ENCODE measurements at regions of chr10 and their contacts with region 1.

Region 1: DNA sequence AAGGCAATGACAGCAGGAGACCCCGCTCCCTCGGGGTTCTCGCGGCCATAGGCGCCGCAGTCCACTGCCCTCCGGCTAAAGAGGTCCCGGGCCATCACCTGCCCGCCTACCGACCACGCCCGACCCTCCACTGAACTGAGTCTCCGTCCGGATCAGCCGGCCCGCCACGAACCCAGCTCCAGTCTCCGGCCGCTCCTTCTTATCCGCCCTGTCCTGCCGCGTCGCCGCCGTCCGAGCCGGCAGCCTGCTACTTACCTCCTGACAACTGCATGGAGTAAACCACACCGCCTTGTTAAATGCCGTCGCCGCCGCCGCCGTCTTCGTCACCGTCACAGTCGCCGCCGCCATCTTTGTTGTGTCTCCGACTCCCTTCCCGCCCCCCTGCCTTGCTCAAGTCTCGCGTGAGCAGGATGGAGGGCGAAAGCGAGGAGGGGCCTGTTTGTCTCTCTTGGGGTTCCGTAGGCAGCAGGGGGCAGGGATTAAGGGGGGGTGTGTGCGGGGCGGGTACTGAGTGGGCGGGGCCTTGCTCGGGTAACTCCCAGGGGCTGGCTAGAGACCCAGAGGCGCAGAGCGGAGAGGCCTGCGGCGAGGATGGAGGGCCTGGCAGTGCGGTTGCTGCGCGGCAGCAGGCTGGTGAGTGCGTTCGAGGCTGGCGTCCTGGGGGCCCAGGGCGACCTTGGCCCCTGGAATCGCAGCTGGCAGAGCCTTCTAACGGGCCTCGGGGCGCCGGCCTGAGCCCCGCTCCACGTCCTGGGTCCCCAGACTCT is at the starts of genes ACADSB and IKZF5:
- DNase-seq: peak; percentile 95
- H3K4me3 ChIP-seq: peak within 1 kb of the TSS; percentile 73 to 96
- H3K27ac ChIP-seq: peak within 1 kb of the TSS; percentile 91 to 93
- H3K4me1 ChIP-seq: no peaks in the 10 kb centered on the region
- H3K27me3 ChIP-seq: no peaks in the 10 kb centered on the region
- CTCF ChIP-seq: no peak
- POLR2A ChIP-seq: peak; percentile 86
- total RNA-seq, gene ACADSB: 17.2 to 38.6 TPM
- total RNA-seq, gene IKZF5: 9.8 to 15.8 TPM

Region 2: GRCh38 chr10:122953827-122954730 is 54.5 kb before region 1 on chr10 and contains the start of gene C10orf88:
- intact Hi-C with region 1: loop called (anchors 2 kb)
- DNase-seq: peak; percentile 95
- H3K4me3 ChIP-seq: peak within 1 kb of the TSS; percentile 65 to 79
- H3K27ac ChIP-seq: peak within 1 kb of the TSS; percentile 54 to 71
- H3K4me1 ChIP-seq: no peaks in the 10 kb centered on the region
- H3K27me3 ChIP-seq: no peaks in the 10 kb centered on the region
- CTCF ChIP-seq: peak in 1 of 4 experiments; percentile 19
- POLR2A ChIP-seq: peak; percentile 49
- total RNA-seq, gene C10orf88: 6.6 to 15.2 TPM

Region 3: DNA sequence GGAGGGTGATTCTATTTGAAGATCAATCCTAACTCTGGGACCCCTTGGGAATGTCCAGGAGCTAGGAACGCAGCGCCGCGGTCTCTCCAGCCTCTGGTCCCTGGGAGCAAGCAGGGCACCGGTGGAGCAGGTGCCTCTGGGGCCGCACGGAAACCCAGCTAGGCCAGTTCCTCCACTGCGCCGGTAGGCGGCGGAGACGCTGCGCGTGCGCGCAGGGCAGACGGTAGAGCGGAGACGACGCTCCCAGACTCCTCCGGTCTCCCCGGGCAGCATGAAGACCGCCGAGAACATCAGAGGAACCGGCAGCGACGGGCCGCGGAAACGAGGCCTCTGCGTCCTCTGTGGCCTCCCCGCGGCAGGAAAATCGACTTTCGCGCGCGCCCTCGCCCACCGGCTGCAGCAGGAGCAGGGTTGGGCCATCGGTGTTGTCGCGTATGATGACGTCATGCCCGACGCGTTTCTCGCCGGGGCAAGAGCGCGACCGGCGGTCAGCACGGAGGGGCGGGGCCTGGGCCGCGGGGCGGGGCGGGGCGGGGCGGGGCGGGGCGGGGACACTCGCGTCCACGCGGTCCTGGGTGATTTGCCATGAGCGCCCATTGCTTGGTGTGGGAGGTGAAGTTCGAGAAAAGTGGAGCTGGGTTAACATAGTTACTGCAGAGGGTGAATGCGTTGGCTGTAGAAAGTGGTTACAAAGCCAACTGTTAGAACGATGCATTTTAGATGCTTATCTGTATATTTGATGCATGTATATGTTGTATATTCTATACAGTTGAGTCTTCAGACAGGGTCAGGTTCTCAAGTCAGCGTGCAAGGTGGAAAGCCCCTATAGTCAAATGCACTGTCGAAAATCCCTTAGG is 28.2 kb before region 1 on chr10 and contains the start of gene PSTK:
- intact Hi-C with region 1: loop called (anchors 1 kb)
- DNase-seq: peak; percentile 79
- H3K4me3 ChIP-seq: peak within 1 kb of the TSS; percentile 75 to 76
- H3K27ac ChIP-seq: peak within 1 kb of the TSS; percentile 92 to 94
- H3K4me1 ChIP-seq: no peaks in the 10 kb centered on the region
- H3K27me3 ChIP-seq: no peaks in the 10 kb centered on the region
- CTCF ChIP-seq: peak; percentile 81 to 98 (median 94)
- POLR2A ChIP-seq: peak; percentile 35
- total RNA-seq, gene PSTK: 5.1 to 10.0 TPM

Region 4: DNA sequence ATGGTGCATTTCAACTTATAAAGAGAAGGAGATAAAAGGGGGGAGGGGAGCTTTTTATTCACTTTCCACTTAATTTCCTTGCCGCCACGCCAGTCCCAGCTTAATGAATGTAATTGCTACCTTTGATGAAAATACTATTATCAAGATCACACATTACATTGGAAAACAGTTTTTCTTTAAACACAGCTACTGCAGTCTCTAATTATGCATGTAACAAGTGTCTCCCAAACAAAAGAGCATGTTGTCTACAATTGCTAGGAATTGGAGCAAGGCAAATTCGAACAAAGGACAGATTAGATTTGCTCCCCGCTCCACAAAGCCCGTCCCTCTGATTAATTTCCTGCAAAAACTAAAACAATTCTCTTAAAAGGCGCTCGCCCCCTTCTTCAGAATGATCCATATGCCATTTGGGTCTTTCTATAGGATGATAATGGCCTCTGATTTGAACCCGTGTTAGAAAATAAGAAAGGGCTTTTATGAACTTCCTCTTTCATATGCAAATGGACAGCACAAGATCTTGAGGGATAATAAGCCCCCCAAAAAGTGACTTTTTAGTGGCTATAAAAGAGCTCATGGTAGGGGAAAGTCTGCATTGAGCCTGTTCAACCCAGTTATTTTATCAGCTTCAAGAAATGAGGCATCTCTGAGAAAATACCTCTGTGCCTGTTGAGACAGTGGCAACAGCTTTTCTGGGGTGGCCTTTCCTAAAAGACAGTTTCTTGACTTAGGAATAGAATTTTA is 60.8 kb after region 1 on chr10:
- intact Hi-C with region 1: no loop called
- DNase-seq: no peak
- H3K4me3 ChIP-seq: no peak overlapping the region
- H3K27ac ChIP-seq: no peak overlapping the region
- H3K4me1 ChIP-seq: no peaks in the 10 kb centered on the region
- H3K27me3 ChIP-seq: no peaks in the 10 kb centered on the region
- CTCF ChIP-seq: no peak
- POLR2A ChIP-seq: no peak

Region 5: GRCh38 chr10:123153486-123154091 is 145.0 kb after region 1 on chr10:
- intact Hi-C with region 1: loop called (anchors 2 kb)
- DNase-seq: no peak
- H3K4me3 ChIP-seq: no peak overlapping the region
- H3K27ac ChIP-seq: no peak overlapping the region
- H3K4me1 ChIP-seq: peaks cover 6% of the 10 kb centered on the region
- H3K27me3 ChIP-seq: peaks cover 27% of the 10 kb centered on the region
- CTCF ChIP-seq: no peak
- POLR2A ChIP-seq: no peak

Measured in prostate gland (tissue), 2 donors.